ENCODE measurements at regions of chr4 and their contacts with region 1.

Region 1: GRCh38 chr4:6546681-6547447 is 28.1 kb upstream of the MAN2B2 start:
- DNase-seq: peak; percentile 67
- ATAC-seq: peak; percentile 60
- H3K4me3 Mint-ChIP-seq: no peak overlapping the region
- H3K27ac Mint-ChIP-seq: no peak overlapping the region
- H3K4me1 Mint-ChIP-seq: no peaks in the 10 kb centered on the region
- H3K27me3 Mint-ChIP-seq: peaks cover 24% of the 10 kb centered on the region

Region 2: GRCh38 chr4:5839751-5840674 is 706.9 kb before region 1 on chr4:
- CTCF ChIA-PET with region 1: no interaction called
- POLR2A ChIA-PET with region 1: no interaction called
- intact Hi-C with region 1: no loop called
- DNase-seq: no peak
- ATAC-seq: no peak
- H3K4me3 Mint-ChIP-seq: no peak overlapping the region
- H3K27ac Mint-ChIP-seq: no peak overlapping the region
- H3K4me1 Mint-ChIP-seq: no peaks in the 10 kb centered on the region
- H3K27me3 Mint-ChIP-seq: peaks cover 6% of the 10 kb centered on the region

Region 3: DNA sequence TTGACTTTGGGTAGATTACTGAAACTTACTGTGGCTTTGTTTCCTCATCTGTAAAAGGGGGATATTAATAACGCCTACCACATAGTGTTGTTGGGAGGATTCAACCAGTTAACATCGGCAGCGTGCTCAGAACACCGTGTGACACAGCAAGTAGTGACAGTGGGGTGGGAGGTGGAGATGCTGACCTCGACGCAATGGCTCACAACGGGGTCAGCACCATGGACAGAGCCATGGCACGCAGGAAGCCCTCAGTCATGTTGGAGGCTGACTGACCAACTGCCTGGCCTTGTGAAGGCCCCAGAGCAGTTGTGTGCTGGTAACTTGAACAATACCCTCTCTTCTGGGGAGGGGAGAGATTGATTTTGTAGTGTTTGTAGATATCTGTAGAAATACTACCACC is 184.0 kb before region 1 on chr4:
- CTCF ChIA-PET with region 1: interaction called, 4 read pairs
- POLR2A ChIA-PET with region 1: no interaction called
- intact Hi-C with region 1: loop called in 1 of 2 experiments (anchors 2 kb)
- DNase-seq: peak; percentile 61
- ATAC-seq: no peak
- H3K4me3 Mint-ChIP-seq: no peak overlapping the region
- H3K27ac Mint-ChIP-seq: no peak overlapping the region
- H3K4me1 Mint-ChIP-seq: no peaks in the 10 kb centered on the region
- H3K27me3 Mint-ChIP-seq: peaks cover 7% of the 10 kb centered on the region

Region 4: DNA sequence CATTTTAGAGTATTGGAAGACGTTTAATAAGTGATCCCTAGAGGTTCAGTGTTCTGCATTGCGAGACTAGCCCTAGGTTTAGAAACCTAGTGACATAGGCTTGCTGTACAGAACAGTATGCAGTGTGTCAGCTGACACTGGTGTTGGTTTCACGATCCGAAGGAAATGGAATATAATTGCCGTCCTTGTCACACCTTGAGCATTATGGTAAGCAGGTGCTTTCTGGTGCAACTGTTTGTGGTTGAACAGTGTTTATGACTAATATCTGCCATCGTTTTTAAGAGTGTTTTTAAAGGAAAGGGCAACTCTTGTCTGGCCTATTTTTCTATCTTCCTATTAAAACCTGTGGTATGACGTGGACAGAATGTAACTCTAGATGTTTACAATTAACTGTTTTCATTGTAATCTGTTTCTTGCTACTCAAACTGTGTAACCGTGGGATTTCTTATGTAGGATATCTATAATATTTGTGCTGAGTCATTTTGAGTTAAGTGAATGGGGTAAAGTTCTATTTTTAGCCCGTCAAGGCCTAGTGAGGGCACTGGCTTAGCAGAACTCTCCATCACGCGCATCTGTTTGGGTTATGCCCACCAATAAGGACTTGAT is 308.9 kb after region 1 on chr4:
- CTCF ChIA-PET with region 1: no interaction called
- POLR2A ChIA-PET with region 1: no interaction called
- intact Hi-C with region 1: no loop called
- DNase-seq: peak; percentile 48
- ATAC-seq: peak; percentile 95
- H3K4me3 Mint-ChIP-seq: peak overlapping the region; percentile 38
- H3K27ac Mint-ChIP-seq: peak overlapping the region; percentile 88
- H3K4me1 Mint-ChIP-seq: peaks cover 27% of the 10 kb centered on the region
- H3K27me3 Mint-ChIP-seq: no peaks in the 10 kb centered on the region

Measured in activated CD4-positive, alpha-beta T cell treated with anti-CD3 and anti-CD28 coated beads for 36 hours (primary cell).